Endothelial cell of umbilical vein (primary cell): ENCODE measurements at regions of chr14 and their contacts with region 1.

Region 1: DNA sequence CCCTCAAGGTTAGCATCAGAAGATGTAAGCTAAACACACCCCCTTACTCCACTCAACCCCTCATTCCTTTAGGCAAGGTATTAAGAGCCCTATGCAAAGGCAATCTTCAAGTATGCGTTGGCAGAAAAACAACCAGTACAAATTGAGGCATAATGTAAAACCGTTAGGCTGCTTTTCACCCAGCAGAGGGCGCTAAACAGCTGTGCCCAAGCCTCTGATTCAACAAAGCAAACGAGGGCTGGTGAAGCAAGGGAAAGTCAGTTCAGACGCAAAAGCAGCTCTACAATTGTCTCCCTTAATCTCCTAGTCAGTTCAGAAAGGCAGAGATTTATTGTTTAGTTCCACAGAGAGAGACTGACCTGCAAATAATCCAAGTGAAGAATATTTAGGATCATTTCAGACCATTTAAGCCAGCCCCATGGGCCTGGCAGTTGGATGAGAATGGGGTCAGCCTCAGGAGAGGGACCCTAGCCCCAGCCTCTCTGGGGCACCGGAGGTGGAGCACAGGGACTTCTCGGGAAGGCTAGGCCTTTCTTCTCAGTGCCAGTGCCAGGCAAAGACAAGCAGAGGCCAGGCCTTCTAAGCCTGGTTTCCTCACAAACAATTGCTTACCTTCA is 23.5 kb downstream of the DCAF5 start:
- DNase-seq: peak; percentile 82
- H3K4me3 ChIP-seq: no peak overlapping the region
- H3K27ac ChIP-seq: no peak overlapping the region
- H3K4me1 ChIP-seq: peaks cover 16% of the 10 kb centered on the region
- H3K27me3 ChIP-seq: no peaks in the 10 kb centered on the region
- CTCF ChIP-seq: peak; percentile 91 to 92
- POLR2A ChIP-seq: no peak

Region 2: GRCh38 chr14:69153131-69153872 is 23.9 kb after region 1 on chr14:
- CTCF ChIA-PET with region 1: interaction called, 75 read pairs
- POLR2A ChIA-PET with region 1: no interaction called
- dilution Hi-C with region 1: no loop called
- intact Hi-C with region 1: loop called (anchors 1 kb)
- DNase-seq: peak; percentile 89
- H3K4me3 ChIP-seq: peak overlapping the region; percentile 81 to 97 (median 83)
- H3K27ac ChIP-seq: peak overlapping the region; percentile 55
- H3K4me1 ChIP-seq: peaks cover 26% of the 10 kb centered on the region
- H3K27me3 ChIP-seq: no peaks in the 10 kb centered on the region
- CTCF ChIP-seq: no peak
- POLR2A ChIP-seq: peak; percentile 61

Region 3: DNA sequence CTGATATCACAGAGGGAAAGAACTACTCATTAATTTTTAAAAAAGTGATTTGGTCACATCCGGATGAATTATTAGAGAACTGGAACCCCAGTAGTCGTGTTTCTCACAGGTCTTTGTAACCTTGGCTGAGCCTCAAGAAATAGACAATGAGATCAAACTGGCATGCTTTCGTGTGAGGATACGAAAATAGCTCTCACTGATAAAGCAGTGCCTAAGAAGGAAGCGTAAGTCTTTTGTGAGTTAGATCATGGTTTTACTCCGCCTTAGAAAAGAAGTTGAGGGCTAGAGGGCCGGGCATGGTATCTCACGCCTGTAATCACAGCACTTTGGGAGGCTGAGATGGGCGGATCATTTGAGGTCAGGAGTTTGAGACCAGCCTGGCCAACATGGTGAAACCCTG is 96.8 kb after region 1 on chr14:
- CTCF ChIA-PET with region 1: interaction called, 13 read pairs
- POLR2A ChIA-PET with region 1: no interaction called
- dilution Hi-C with region 1: no loop called
- intact Hi-C with region 1: loop called (anchors 5 kb)
- DNase-seq: peak; percentile 92
- H3K4me3 ChIP-seq: no peak overlapping the region
- H3K27ac ChIP-seq: peak overlapping the region; percentile 47
- H3K4me1 ChIP-seq: peaks cover 9% of the 10 kb centered on the region
- H3K27me3 ChIP-seq: no peaks in the 10 kb centered on the region
- CTCF ChIP-seq: no peak
- POLR2A ChIP-seq: no peak

Region 4: DNA sequence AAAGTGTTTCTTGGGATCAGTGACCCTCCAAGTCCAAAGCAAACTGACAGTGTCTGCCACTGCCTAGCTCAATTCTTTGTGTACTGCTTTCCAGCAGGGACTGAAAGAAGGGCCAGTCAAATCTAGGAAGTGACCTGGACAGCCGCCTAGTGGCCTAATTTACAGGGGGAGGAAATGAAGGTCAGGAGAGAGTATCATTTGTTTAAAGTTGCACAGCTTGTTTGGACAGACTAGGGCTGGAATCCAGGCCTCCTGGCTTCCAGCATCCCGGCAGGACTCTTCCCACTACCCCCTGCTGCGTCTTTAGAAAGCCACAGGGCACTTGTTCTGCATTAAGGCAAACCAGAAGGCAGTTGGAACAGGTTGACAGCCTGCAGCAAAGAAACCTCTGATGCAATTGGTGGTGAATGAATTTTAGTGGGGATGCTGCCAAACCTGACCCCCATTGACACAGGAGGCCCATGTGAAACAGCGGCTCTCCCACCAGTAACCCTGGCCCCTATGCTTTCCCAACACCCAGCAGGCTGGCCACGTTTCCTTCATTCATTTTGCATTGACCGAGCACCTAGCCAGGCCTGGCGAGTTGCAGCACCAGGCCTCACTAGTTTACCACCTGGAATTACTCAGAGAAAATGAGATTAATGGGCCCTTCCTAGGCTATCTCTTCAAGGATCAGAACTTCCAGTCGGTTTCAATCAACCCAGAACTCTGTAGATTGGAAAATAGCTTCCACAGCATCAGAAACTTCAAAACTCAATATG is 158.8 kb after region 1 on chr14:
- CTCF ChIA-PET with region 1: interaction called, 8 read pairs
- POLR2A ChIA-PET with region 1: no interaction called
- dilution Hi-C with region 1: no loop called
- intact Hi-C with region 1: loop called (anchors 1 kb)
- DNase-seq: peak; percentile 46
- H3K4me3 ChIP-seq: no peak overlapping the region
- H3K27ac ChIP-seq: no peak overlapping the region
- H3K4me1 ChIP-seq: no peaks in the 10 kb centered on the region
- H3K27me3 ChIP-seq: no peaks in the 10 kb centered on the region
- CTCF ChIP-seq: peak; percentile 9 to 20
- POLR2A ChIP-seq: no peak